HepG2 (cell line): ENCODE measurements at regions of chr3 and their contacts with region 1.

Region 1: GRCh38 chr3:69051756-69052471 is at the start of gene TMF1:
- DNase-seq: peak; percentile 98
- ATAC-seq: peak; percentile 96
- H3K4me3 ChIP-seq: peak within 1 kb of the TSS; percentile 79 to 95 (median 89)
- H3K27ac ChIP-seq: peak within 1 kb of the TSS; percentile 91
- H3K4me1 ChIP-seq: peaks cover 36% of the 10 kb centered on the region
- H3K27me3 ChIP-seq: no peaks in the 10 kb centered on the region; a peak in 1 of 5 replicates
- CTCF ChIP-seq: no peak
- EP300 ChIP-seq: 0 out of 4 replicates have a peak, but pooled peaks of 1 of the 2 experiments have one; percentile 21
- POLR2A ChIP-seq: peak; percentile 84
- RAD21 ChIP-seq: 0 out of 2 replicates have a peak, but pooled peaks have one; percentile 7
- total RNA-seq, gene TMF1: 38.4 and 48.1 TPM in 2 replicates

Region 2: GRCh38 chr3:69013253-69014021 is 38.5 kb before region 1 on chr3 and contains the start of gene EOGT:
- CTCF ChIA-PET with region 1: no interaction called
- POLR2A ChIA-PET with region 1: interaction called, 11 read pairs
- in situ Hi-C with region 1: no loop called
- intact Hi-C with region 1: loop called (anchors 5 kb)
- DNase-seq: peak; percentile 75
- ATAC-seq: peak; percentile 95
- H3K4me3 ChIP-seq: peak within 1 kb of the TSS; percentile 79 to 94 (median 86)
- H3K27ac ChIP-seq: peak within 1 kb of the TSS; percentile 90
- H3K4me1 ChIP-seq: peaks cover 24% of the 10 kb centered on the region
- H3K27me3 ChIP-seq: no peaks in the 10 kb centered on the region
- CTCF ChIP-seq: peak; percentile 89
- EP300 ChIP-seq: peak in 1 of 2 experiments; percentile 17; a peak in 1 of 4 replicates
- POLR2A ChIP-seq: peak; percentile 61 to 81
- RAD21 ChIP-seq: peak; percentile 53; the same call in 1 of the 2 replicates
- total RNA-seq, gene EOGT: 11.1 and 18.6 TPM in 2 replicates

Region 3: DNA sequence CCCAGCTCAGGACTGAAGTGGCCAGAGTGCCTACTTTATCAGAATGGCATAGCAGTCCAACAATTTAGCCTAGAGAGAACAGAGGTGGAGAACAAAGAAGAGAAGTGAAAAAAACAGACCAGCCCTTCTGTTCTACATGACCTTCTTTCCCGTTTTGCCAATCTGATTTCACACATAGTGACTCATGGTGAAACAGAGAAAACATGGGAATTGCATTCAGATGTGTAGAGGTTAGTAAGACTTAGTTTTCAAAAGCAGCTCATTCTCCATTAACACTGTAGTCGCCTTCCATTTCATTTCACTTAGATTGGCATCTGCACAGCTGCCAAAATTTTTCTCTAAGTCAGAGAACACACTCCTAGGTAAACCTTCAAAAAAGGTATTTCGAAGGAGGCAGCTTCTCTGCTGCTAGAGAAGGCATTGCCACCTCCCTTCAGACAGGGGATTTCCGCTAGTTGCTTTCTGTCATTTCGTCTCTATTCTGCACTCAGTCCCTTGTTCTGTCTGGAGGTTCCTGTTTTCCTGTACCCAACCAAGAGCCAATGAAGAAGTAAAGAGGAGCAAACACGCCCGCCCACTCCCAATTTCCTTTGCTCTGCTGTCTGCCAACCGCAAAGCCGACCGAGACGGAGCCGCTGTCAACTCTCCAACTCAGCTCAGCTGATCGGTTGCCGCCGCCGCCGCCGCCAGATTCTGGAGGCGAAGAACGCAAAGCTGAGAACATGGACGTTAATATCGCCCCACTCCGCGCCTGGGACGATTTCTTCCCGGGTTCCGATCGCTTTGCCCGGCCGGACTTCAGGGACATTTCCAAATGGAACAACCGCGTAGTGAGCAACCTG is 32.6 kb after region 1 on chr3 and contains the start of gene ARL6IP5:
- CTCF ChIA-PET with region 1: no interaction called
- POLR2A ChIA-PET with region 1: interaction called, 18 read pairs
- in situ Hi-C with region 1: no loop called
- intact Hi-C with region 1: loop called (anchors 1 kb)
- DNase-seq: peak; percentile 78
- ATAC-seq: peak; percentile 86
- H3K4me3 ChIP-seq: peak within 1 kb of the TSS; percentile 73 to 91 (median 88)
- H3K27ac ChIP-seq: peak within 1 kb of the TSS; percentile 64
- H3K4me1 ChIP-seq: peaks cover 57% of the 10 kb centered on the region
- H3K27me3 ChIP-seq: no peaks in the 10 kb centered on the region; a peak in 1 of 5 replicates
- CTCF ChIP-seq: no peak
- EP300 ChIP-seq: no peak
- POLR2A ChIP-seq: 0 out of 4 replicates have a peak, but pooled peaks of 1 of the 2 experiments have one; percentile 33
- RAD21 ChIP-seq: no peak
- total RNA-seq, gene ARL6IP5: 19.6 and 29.6 TPM in 2 replicates